CD8-positive, alpha-beta T cell (primary cell): ENCODE measurements at regions of chr3 and their contacts with region 1.

Region 1: DNA sequence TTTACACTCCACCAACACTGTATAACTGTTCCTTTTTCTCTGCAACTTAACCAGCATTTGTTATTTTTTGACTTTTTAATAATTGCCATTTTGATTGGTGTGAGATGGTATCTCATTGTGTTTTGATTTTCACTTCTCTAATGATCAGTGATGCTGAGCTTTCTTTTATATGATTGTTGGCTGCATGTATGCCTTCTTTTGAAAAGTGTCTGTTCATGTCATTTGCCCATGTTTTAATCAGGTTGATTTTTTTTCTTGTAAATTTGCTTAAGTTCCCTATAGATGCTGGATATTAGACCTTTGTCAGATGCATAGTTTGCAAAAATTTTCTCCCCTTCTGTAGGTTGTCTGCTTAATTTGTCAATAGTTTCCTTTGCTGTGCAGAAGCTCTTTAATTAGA is 263.0 kb downstream of the MBNL1 start:
- DNase-seq: no peak
- ATAC-seq: no peak
- H3K4me3 ChIP-seq: no peak overlapping the region
- H3K4me3 Mint-ChIP-seq: no peak overlapping the region
- H3K27ac ChIP-seq: no peak overlapping the region
- H3K27ac Mint-ChIP-seq: no peak overlapping the region
- H3K4me1 ChIP-seq: no peaks in the 10 kb centered on the region
- H3K4me1 Mint-ChIP-seq: no peaks in the 10 kb centered on the region
- H3K27me3 ChIP-seq: no peaks in the 10 kb centered on the region
- H3K27me3 Mint-ChIP-seq: peaks cover 4% of the 10 kb centered on the region
- CTCF ChIP-seq: no peak

Region 2: GRCh38 chr3:152488449-152488848 is 43.3 kb before region 1 on chr3:
- CTCF ChIA-PET with region 1: no interaction called
- POLR2A ChIA-PET with region 1: no interaction called
- intact Hi-C with region 1: no loop called
- DNase-seq: no peak
- ATAC-seq: no peak
- H3K4me3 ChIP-seq: no peak overlapping the region
- H3K4me3 Mint-ChIP-seq: no peak overlapping the region
- H3K27ac ChIP-seq: no peak overlapping the region
- H3K27ac Mint-ChIP-seq: no peak overlapping the region
- H3K4me1 ChIP-seq: no peaks in the 10 kb centered on the region
- H3K4me1 Mint-ChIP-seq: no peaks in the 10 kb centered on the region
- H3K27me3 ChIP-seq: no peaks in the 10 kb centered on the region
- H3K27me3 Mint-ChIP-seq: peaks cover 8% of the 10 kb centered on the region
- CTCF ChIP-seq: no peak

Region 3: DNA sequence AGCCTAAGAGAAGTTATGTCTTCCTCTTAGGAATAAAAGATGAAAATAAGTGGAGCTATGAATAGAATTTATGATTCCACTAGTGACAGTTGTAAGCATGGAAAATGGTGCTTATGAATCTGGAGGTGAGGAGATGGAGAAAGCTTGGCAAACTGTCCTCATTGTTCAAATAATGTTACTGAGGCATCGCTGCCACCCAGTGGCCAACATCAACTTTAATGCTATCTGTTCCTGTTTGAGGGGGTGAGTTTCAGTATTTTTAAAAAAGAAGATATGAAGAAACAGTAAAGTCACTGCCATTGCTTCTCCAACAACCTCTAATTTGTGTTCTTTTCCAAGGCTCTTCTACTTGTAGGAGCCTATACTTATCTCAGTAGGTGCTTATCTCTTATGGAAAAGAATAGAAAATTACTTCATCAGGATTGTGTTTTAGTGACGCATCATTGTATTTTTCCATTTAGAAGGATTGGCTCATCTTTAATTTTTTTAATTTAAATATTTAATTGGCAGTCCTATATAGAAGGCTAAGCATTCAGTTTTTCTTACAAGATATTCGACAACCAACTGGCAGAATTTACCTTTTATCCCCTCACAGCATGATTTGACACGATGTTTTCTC is 42.9 kb after region 1 on chr3:
- CTCF ChIA-PET with region 1: no interaction called
- POLR2A ChIA-PET with region 1: no interaction called
- intact Hi-C with region 1: loop called in 1 of 2 experiments (anchors 1 kb)
- DNase-seq: peak in 5 of 9 experiments; percentile 17 to 43 (median 19)
- ATAC-seq: no peak
- H3K4me3 ChIP-seq: no peak overlapping the region
- H3K4me3 Mint-ChIP-seq: no peak overlapping the region
- H3K27ac ChIP-seq: no peak overlapping the region
- H3K27ac Mint-ChIP-seq: no peak overlapping the region
- H3K4me1 ChIP-seq: no peaks in the 10 kb centered on the region
- H3K4me1 Mint-ChIP-seq: no peaks in the 10 kb centered on the region
- H3K27me3 ChIP-seq: no peaks in the 10 kb centered on the region
- H3K27me3 Mint-ChIP-seq: peaks cover 4% of the 10 kb centered on the region
- CTCF ChIP-seq: peak; percentile 43

Region 4: DNA sequence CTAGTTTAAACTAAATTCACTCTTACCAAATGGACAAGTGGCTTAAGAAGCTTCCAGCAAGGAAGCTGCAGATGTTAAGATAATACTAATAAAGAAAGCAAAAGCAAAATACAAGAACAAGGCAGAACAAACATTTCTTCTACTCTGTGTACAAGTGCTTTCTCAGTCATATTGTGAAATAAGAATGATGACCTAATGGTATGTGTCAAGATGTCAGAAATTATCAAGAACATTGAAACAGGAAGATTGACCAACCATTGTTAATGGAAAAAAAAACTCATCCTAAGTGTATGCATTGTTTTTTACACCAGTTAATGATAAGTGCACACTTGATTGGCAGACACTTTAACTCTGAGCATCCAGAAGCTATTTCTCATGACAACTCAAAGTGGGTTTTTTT is 237.8 kb after region 1 on chr3:
- CTCF ChIA-PET with region 1: no interaction called
- POLR2A ChIA-PET with region 1: no interaction called
- intact Hi-C with region 1: no loop called
- DNase-seq: no peak
- ATAC-seq: no peak
- H3K4me3 ChIP-seq: no peak overlapping the region
- H3K4me3 Mint-ChIP-seq: no peak overlapping the region
- H3K27ac ChIP-seq: no peak overlapping the region
- H3K27ac Mint-ChIP-seq: no peak overlapping the region
- H3K4me1 ChIP-seq: no peaks in the 10 kb centered on the region
- H3K4me1 Mint-ChIP-seq: no peaks in the 10 kb centered on the region
- H3K27me3 ChIP-seq: no peaks in the 10 kb centered on the region
- H3K27me3 Mint-ChIP-seq: no peaks in the 10 kb centered on the region
- CTCF ChIP-seq: no peak